Right lobe of liver (tissue), 6 donors: ENCODE measurements at regions of chr7 and their contacts with region 1.

Region 1: GRCh38 chr7:105759670-105760550 is 116.5 kb downstream of the ATXN7L1 start:
- DNase-seq: peak in 2 of 3 donors; percentile 32 to 55
- ATAC-seq: peak; percentile 81 to 92 (median 84)
- H3K4me3 ChIP-seq: no peak overlapping the region
- H3K27ac ChIP-seq: no peak overlapping the region
- H3K4me1 ChIP-seq: no peaks in the 10 kb centered on the region
- H3K27me3 ChIP-seq: no peaks in the 10 kb centered on the region
- CTCF ChIP-seq: peak; percentile 60 to 71 (median 62)
- POLR2A ChIP-seq: no peak

Region 2: GRCh38 chr7:105423987-105424386 is 335.9 kb before region 1 on chr7:
- intact Hi-C with region 1: no loop called
- DNase-seq: no peak
- ATAC-seq: no peak
- H3K4me3 ChIP-seq: no peak overlapping the region
- H3K27ac ChIP-seq: no peak overlapping the region
- H3K4me1 ChIP-seq: no peaks in the 10 kb centered on the region
- H3K27me3 ChIP-seq: no peaks in the 10 kb centered on the region
- CTCF ChIP-seq: no peak
- POLR2A ChIP-seq: no peak

Region 3: GRCh38 chr7:105664816-105665525 is 94.9 kb before region 1 on chr7:
- intact Hi-C with region 1: no loop called
- DNase-seq: peak in 1 of 3 donors; percentile 74
- ATAC-seq: peak; percentile 42 to 85 (median 64)
- H3K4me3 ChIP-seq: no peak overlapping the region
- H3K27ac ChIP-seq: no peak overlapping the region
- H3K4me1 ChIP-seq: peaks cover 0 to 12% (median 0%) of the 10 kb centered on the region in 4 donors
- H3K27me3 ChIP-seq: no peaks in the 10 kb centered on the region
- CTCF ChIP-seq: no peak
- POLR2A ChIP-seq: no peak

Region 4: GRCh38 chr7:106009403-106010226 is 249.7 kb after region 1 on chr7:
- intact Hi-C with region 1: loop called in 1 of 2 experiments (anchors 10 kb)
- DNase-seq: peak; percentile 69 to 79 (median 75)
- ATAC-seq: peak; percentile 99
- H3K4me3 ChIP-seq: no peak overlapping the region
- H3K27ac ChIP-seq: no peak overlapping the region
- H3K4me1 ChIP-seq: peaks cover 0 to 7% (median 0%) of the 10 kb centered on the region in 4 donors
- H3K27me3 ChIP-seq: no peaks in the 10 kb centered on the region
- CTCF ChIP-seq: peak; percentile 93 to 100 (median 97)
- POLR2A ChIP-seq: no peak

Region 5: DNA sequence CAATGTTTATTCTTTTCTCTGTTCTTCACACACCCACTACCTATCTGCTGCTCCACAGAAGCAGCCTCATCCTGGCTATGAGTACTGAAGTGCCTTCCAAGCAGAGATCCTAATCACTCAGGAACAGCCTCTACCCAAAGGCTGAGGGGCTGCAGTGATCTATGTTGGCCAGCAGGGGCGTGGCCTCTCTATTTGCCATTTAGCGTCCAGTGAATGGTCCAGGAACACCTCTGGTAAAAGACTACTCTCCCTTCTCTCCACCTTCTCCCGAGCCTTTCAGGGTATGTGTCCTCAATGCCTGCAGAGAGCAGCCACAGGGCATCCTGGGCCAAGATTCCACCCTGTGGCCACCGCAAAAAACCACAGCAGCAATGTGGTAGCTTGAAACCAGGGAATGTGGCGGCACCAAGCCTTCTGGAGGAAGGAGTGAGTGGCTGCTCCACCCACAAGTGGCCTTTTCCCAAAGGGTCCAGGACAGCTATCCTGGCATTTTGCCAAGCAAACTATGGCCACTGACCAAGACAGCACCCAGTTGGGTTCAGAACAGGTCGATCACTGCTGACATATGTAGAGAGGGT is 281.3 kb after region 1 on chr7:
- intact Hi-C with region 1: loop called (anchors 10 kb)
- DNase-seq: no peak
- ATAC-seq: peak; percentile 46 to 73 (median 58)
- H3K4me3 ChIP-seq: no peak overlapping the region
- H3K27ac ChIP-seq: no peak overlapping the region
- H3K4me1 ChIP-seq: peaks cover 0 to 7% (median 0%) of the 10 kb centered on the region in 4 donors
- H3K27me3 ChIP-seq: no peaks in the 10 kb centered on the region
- CTCF ChIP-seq: peak; percentile 48 to 61 (median 53)
- POLR2A ChIP-seq: no peak